Sciatic nerve (tissue), 2 donors: ENCODE measurements at regions of chr20 and their contacts with region 1.

Region 1: GRCh38 chr20:58850693-58851174 is at the start of gene GNAS-AS1:
- DNase-seq: peak; percentile 87
- ATAC-seq: peak; percentile 88
- total RNA-seq, gene GNAS-AS1: 1.5 TPM

Region 2: GRCh38 chr20:56903421-56903820 is 1947.3 kb before region 1 on chr20:
- intact Hi-C with region 1: no loop called
- DNase-seq: no peak
- ATAC-seq: no peak

Region 3: GRCh38 chr20:58583176-58583575 is 267.6 kb before region 1 on chr20:
- intact Hi-C with region 1: no loop called
- DNase-seq: peak; percentile 28
- ATAC-seq: no peak

Region 4: DNA sequence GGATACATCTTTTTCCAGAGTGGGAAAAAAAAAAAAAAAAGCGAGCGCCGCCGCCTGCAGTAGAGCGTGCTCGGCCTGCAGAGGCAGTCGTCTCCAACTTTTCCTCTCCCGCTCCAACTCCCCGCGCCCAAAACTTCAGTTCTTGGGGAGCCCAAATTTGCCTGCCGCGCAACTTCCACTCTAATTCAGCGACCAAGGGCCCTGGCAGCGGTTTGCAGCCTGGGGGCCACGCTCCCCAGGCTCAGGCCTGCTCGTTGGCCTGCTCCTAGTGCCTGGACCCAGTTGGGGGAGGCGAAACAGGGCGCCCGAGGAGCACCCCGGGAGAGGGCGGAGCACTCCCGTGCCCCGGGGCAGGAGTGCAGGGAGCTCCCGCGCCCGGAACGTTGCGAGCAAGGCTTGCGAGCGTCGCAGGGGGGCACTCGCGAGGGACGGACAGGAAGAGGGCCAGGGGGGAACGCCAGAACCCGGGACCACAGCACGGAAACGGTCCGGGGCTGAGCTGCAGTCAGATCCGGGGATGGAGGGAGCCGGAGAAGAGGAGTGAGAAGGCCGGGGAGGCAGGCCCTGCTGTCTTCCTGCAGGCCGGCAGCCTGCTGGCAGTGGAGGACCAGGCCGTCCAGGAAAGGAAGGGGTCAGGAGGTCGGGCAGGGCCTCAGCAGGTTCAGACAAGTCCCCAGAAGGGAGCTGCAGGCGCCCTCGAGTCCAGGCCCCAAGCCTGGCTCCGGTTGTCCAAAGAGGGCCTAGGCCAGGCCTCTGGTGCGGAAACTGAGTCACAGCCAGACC is 199.8 kb before region 1 on chr20 and contains the start of gene STX16:
- intact Hi-C with region 1: loop called (anchors 5 kb)
- DNase-seq: peak; percentile 94
- ATAC-seq: peak; percentile 97
- total RNA-seq, gene STX16: 78.7 TPM

Region 5: GRCh38 chr20:58800134-58800656 is 50.5 kb before region 1 on chr20:
- intact Hi-C with region 1: loop called (anchors 1 kb)
- DNase-seq: no peak
- ATAC-seq: no peak

Region 6: DNA sequence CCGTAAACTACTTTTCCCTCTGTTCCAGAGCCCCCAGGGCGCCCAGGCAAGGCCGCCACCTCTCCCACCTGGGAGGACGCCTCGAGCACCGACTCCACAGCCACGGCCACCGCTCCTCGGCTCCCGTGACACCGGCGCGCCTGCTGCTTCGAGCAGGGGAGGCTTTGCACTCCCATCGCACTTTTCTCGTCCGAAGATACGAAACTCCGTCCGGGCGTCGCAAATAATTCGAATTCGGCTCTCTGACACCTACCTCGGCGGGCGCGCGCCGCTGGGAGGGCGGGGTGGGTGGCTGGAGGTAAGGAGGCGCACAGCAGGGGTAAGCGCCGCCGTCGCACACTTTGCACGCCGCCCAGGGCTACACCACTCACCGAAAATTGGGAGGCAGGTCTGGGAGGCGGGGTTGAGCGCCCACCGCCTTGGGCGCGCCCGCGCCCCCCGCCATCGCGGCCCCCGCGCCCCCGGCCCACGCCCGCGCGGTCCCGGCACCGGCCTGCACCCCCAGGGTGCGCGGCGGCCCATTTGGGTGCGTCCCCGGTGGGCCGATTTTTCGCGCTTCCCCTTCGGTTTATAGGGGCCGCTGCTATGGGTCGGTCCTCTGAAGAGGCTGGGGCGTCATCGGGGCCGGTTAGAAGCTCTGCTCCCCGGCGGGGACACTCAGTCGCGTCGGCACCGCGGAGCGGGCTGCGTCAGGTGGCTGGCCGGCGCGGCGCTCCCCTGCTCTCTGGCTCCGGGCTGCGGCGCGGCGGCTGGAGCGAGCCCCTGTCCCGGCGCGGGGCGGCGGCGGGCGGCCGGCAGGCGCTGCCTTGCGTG is 38.0 kb after region 1 on chr20:
- intact Hi-C with region 1: no loop called
- DNase-seq: peak; percentile 88
- ATAC-seq: peak; percentile 72

Region 7: DNA sequence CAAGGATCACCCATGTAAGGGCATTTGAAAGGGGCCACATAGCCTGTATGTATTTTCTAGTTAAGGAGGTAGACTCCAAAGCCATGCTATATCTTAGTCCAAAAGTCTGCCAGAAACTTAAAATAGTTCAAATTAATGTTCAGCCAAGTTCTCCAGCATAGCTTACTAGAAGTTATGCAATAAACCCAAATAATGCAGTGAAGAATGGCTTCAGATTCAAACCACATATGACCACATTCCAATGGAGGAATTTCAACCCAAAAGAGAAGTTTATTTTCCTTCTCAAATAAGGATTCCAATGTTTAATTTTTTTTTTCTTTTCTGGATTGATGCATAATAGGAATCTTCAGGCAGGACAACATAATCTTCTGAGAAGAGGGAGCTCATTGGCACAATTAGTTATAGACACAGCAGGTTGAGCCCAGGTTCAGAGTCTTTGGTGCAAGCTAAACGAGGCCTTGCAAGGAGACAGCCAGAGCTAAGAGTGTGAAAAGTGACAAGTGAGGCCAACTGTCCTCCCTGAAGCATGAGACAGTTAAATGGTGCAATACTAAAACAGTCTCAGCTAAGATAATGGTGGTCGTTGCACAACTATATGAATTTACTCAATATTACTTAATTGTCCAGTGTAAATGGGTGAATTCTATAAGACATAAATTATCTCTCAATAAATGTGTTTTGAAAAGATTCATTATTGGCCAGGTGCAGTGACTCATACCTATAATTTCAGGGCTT is 1802.5 kb after region 1 on chr20:
- intact Hi-C with region 1: no loop called
- DNase-seq: no peak
- ATAC-seq: no peak